ENCODE measurements at regions of chr6 and their contacts with region 1.

Region 1: DNA sequence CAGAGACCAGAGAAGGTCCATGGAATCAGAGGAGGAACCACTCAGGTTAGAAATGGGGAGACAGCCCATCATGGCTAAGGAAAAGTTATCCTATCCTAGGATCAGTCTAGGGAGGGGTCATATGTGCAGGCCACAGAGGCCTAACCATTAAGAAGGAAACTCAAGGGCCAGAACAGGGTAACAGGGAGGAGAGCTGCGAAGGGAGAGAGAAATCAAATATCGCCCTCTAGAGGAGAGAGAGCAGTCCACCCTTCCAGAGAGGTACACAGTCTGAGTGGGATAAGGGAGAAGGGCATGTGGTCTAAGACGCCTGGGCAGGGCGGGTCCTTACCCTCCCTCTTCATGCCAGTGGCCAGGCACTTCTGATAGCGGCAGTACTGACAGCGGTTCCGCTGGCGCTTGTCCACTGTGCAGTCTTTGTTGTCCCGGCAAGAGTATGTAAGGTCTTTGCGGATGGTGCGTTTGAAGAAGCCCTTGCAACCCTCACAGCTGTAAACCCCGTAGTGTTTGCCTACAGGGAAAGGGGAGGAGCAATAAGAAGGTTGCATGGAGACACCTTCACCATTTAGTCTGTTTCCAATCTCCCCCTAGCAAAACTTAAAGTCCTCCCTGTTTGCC is 2.9 kb downstream of the RXRB start:
- DNase-seq: peak in 1 of 2 experiments; percentile 70
- H3K4me3 ChIP-seq: no peak overlapping the region
- H3K27ac ChIP-seq: no peak overlapping the region
- H3K4me1 ChIP-seq: peaks cover 5 to 18% (median 9%) of the 10 kb centered on the region in 4 experiments
- H3K27me3 ChIP-seq: peaks cover 0 to 4% (median 0%) of the 10 kb centered on the region in 4 experiments; a peak in 3 of 7 replicates
- CTCF ChIP-seq: peak in 2 of 3 experiments; percentile 77 to 91; a peak in 3 of 4 replicates
- EP300 ChIP-seq: no peak
- POLR2A ChIP-seq: no peak
- RAD21 ChIP-seq: peak; percentile 67 to 73

Region 2: GRCh38 chr6:33000055-33000454 is 197.5 kb before region 1 on chr6:
- CTCF ChIA-PET with region 1: interaction called, 14 read pairs
- POLR2A ChIA-PET with region 1: interaction called, 3 read pairs
- DNase-seq: peak in 1 of 2 experiments; percentile 41
- H3K4me3 ChIP-seq: no peak overlapping the region
- H3K27ac ChIP-seq: no peak overlapping the region
- H3K4me1 ChIP-seq: no peaks in the 10 kb centered on the region
- H3K27me3 ChIP-seq: peaks cover 0 to 2% (median 0%) of the 10 kb centered on the region in 4 experiments; a peak in 2 of 7 replicates
- CTCF ChIP-seq: peak; percentile 46 to 93 (median 91)
- EP300 ChIP-seq: no peak
- POLR2A ChIP-seq: no peak
- RAD21 ChIP-seq: peak; percentile 96 to 97

Region 3: GRCh38 chr6:33126101-33126714 is 71.3 kb before region 1 on chr6:
- CTCF ChIA-PET with region 1: interaction called, 17 read pairs
- POLR2A ChIA-PET with region 1: interaction called, 4 read pairs
- DNase-seq: peak in 1 of 2 experiments; percentile 91
- H3K4me3 ChIP-seq: no peak overlapping the region
- H3K27ac ChIP-seq: no peak overlapping the region
- H3K4me1 ChIP-seq: peaks cover 0 to under 1% (median 0%) of the 10 kb centered on the region in 4 experiments; a peak in 2 of 7 replicates
- H3K27me3 ChIP-seq: no peaks in the 10 kb centered on the region
- CTCF ChIP-seq: peak; percentile 72 to 85 (median 80)
- EP300 ChIP-seq: no peak
- POLR2A ChIP-seq: no peak
- RAD21 ChIP-seq: peak; percentile 45 to 56; a peak in 3 of 4 replicates

Region 4: DNA sequence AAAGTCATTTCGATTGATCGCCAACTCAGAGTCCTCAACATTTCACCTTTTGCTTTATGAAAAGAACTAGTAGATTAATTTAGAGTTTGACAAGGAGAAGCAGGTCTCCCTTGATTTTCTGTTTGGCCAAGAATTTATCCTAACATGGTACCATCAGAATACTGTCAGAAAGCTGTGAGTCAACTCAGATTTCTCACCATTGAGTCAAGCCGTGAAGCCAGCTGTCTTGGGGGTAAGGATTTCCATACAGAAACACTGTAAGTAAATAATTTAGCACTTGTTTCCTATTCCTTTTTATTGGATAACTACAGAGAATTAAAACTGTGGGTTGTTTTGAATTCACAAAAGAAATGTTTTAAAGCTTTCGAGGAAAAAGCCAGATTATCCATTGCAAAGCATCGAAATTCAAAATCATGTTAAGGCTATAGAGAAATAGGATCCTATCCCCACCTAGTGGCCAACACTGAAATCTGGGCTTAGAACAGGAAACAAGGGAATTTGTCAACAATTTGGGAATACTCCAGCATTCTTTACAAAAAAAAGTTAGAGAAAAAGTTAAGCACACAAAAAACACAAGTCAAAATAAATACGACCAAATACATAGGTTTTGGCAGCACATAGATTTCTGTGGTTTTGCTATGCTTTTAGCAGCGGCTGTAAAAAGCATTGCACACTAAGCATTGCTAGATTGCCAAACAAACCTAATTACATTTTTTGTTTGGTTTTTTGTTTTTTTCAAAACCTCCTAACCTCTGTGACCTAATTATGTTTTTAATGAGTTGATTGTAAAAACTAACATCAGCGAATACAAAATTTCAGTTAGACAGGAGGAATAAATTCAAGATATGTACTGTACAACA is 49.5 kb before region 1 on chr6:
- CTCF ChIA-PET with region 1: interaction called, 12 read pairs
- POLR2A ChIA-PET with region 1: no interaction called
- DNase-seq: no peak
- H3K4me3 ChIP-seq: no peak overlapping the region
- H3K27ac ChIP-seq: no peak overlapping the region
- H3K4me1 ChIP-seq: peaks cover 0 to 2% (median 0%) of the 10 kb centered on the region in 4 experiments; a peak in 1 of 7 replicates
- H3K27me3 ChIP-seq: no peaks in the 10 kb centered on the region
- CTCF ChIP-seq: peak in 2 of 3 experiments; percentile 61 to 72; a peak in 3 of 4 replicates
- EP300 ChIP-seq: no peak
- POLR2A ChIP-seq: no peak
- RAD21 ChIP-seq: peak; percentile 75 to 80

Region 5: GRCh38 chr6:33161354-33162331 is 35.9 kb before region 1 on chr6:
- CTCF ChIA-PET with region 1: interaction called, 13 read pairs
- POLR2A ChIA-PET with region 1: no interaction called
- DNase-seq: peak in 1 of 2 experiments; percentile 97
- H3K4me3 ChIP-seq: peak overlapping the region; percentile 42 to 74 (median 62)
- H3K27ac ChIP-seq: no peak overlapping the region
- H3K4me1 ChIP-seq: peaks cover 0 to 6% (median 2%) of the 10 kb centered on the region in 4 experiments; a peak in 6 of 7 replicates
- H3K27me3 ChIP-seq: peaks cover 0 to 8% (median 2%) of the 10 kb centered on the region in 4 experiments; a peak in 4 of 7 replicates
- CTCF ChIP-seq: peak in 2 of 3 experiments; percentile 82 to 88; a peak in 3 of 4 replicates
- EP300 ChIP-seq: no peak
- POLR2A ChIP-seq: no peak
- RAD21 ChIP-seq: peak; percentile 48 to 63; a peak in 3 of 4 replicates

Region 6: DNA sequence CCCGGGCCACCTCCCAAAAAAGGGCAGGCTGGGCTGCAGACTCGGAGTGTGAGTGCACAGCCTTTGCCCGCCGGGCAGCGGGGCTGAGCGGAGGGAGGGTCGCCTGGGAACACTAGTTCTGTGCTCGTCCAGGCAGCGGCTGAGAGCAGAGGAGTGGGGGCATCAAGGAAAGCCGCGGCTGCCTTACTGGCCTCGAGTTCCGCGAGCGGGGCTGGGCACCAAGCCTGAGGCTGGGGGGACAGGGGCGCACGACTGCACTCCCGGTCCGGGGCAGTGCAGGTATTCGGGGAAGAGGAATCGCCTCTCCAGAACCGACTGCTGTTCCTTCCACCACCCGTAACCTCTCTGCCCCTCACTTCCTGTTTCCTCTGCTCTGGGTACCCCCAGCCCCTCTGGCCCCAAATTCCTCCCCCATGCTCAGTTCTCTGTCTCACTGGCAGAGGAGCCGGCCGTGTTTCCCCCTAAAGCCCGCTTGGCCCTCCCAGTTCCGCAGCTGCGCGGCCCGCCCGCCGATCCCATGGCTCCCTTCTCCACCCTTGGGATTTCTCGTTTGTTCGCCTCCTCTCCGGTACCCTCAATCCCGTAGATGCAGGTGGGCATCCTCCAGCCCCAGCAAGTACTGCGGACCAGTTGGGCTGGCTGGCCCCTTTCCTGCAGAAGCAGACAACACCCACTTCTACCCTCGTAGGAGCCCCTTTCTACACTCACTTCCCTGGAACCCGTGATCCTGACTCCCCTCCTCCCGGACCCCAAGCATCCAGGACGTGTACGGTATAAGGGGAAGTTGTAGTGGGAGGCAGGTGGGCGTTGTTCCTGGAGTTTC is 15.8 kb after region 1 on chr6:
- CTCF ChIA-PET with region 1: interaction called, 11 read pairs
- POLR2A ChIA-PET with region 1: interaction called, 10 read pairs
- DNase-seq: peak in 1 of 2 experiments; percentile 79
- H3K4me3 ChIP-seq: peak overlapping the region; percentile 50 to 72 (median 66)
- H3K27ac ChIP-seq: no peak overlapping the region
- H3K4me1 ChIP-seq: peaks cover 0 to 13% (median 4%) of the 10 kb centered on the region in 4 experiments; a peak in 6 of 7 replicates
- H3K27me3 ChIP-seq: peaks cover 32 to 71% (median 67%) of the 10 kb centered on the region in 4 experiments
- CTCF ChIP-seq: no peak
- EP300 ChIP-seq: no peak
- POLR2A ChIP-seq: peak in 1 of 2 experiments; percentile 62; a peak in 1 of 3 replicates
- RAD21 ChIP-seq: no peak

Measured in H1 (cell line).